ENCODE measurements at regions of chr4 and their contacts with region 1.

Region 1: GRCh38 chr4:123449780-123450179 is 53.2 kb downstream of the SPRY1 start:
- H3K4me3 Mint-ChIP-seq: no peak overlapping the region
- H3K27ac Mint-ChIP-seq: no peak overlapping the region
- H3K4me1 Mint-ChIP-seq: peaks cover 35% of the 10 kb centered on the region
- H3K27me3 Mint-ChIP-seq: peaks cover 17% of the 10 kb centered on the region

Region 2: DNA sequence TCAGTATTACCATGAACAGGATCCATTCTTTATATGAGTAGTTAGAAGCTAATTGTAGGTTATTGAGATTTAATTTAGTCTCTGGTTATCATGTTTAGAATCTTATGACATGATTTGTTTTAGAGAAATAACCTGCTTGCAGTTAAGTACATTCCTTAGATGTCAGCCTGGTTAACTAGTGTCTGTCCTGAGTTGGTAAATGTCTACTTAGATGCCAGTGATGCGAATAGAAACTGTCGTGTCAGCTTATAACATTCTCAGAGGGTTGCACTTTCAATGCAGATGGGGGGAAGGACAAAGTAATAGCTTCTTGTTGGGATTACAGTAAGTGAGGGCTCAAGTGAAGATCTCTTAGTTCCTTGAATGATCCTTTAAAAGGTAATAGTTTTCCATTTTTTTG is 281.0 kb before region 1 on chr4:
- intact Hi-C with region 1: no loop called
- H3K4me3 Mint-ChIP-seq: no peak overlapping the region
- H3K27ac Mint-ChIP-seq: no peak overlapping the region
- H3K4me1 Mint-ChIP-seq: peaks cover 3% of the 10 kb centered on the region
- H3K27me3 Mint-ChIP-seq: no peaks in the 10 kb centered on the region

Region 3: GRCh38 chr4:123396307-123397143 is 53.3 kb before region 1 on chr4 and contains the start of gene SPRY1:
- intact Hi-C with region 1: loop called (anchors 5 kb)
- H3K4me3 Mint-ChIP-seq: peak within 1 kb of the TSS; percentile 73
- H3K27ac Mint-ChIP-seq: peak within 1 kb of the TSS; percentile 57
- H3K4me1 Mint-ChIP-seq: peaks cover 23% of the 10 kb centered on the region
- H3K27me3 Mint-ChIP-seq: peaks cover 41% of the 10 kb centered on the region